ENCODE measurements at regions of chr4 and their contacts with region 1.

Region 1: GRCh38 chr4:88523325-88524129 is at the start of gene PYURF:
- DNase-seq: peak; percentile 46 to 85 (median 50)
- ATAC-seq: peak; percentile 85
- H3K4me3 ChIP-seq: peak within 1 kb of the TSS; percentile 75
- H3K4me3 Mint-ChIP-seq: peak within 1 kb of the TSS; percentile 88 to 98 (median 92)
- H3K27ac ChIP-seq: peak within 1 kb of the TSS; percentile 79
- H3K27ac Mint-ChIP-seq: peak within 1 kb of the TSS; percentile 88 to 97 (median 93)
- H3K4me1 ChIP-seq: peaks cover 10 to 19% of the 10 kb centered on the region in 2 donors
- H3K4me1 Mint-ChIP-seq: peaks cover 0 to 56% (median 48%) of the 10 kb centered on the region in 7 donors
- H3K27me3 ChIP-seq: no peaks in the 10 kb centered on the region
- H3K27me3 Mint-ChIP-seq: no peaks in the 10 kb centered on the region
- total RNA-seq, gene PYURF: 33.0 to 57.7 (median 47.4) TPM

Region 2: DNA sequence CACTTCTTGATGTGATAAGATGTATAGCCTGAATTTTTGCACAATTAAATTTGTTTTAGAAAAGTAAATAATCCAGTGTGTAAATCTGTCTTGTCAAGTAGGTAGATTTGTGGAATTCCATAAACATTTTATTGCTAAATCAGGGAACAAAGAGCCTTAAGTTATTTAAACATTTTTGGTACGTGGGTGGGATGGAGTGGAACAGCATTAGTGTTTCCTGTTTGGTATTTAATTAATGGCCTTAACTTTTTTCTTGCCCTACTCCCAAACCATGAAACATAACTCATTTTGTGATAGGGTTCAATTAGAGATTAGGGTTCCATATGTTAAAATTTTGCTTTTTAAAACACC is 1096.0 kb before region 1 on chr4:
- CTCF ChIA-PET with region 1: no interaction called
- POLR2A ChIA-PET with region 1: no interaction called
- intact Hi-C with region 1: no loop called
- DNase-seq: no peak
- ATAC-seq: no peak
- H3K4me3 ChIP-seq: no peak overlapping the region
- H3K4me3 Mint-ChIP-seq: no peak overlapping the region
- H3K27ac ChIP-seq: no peak overlapping the region
- H3K27ac Mint-ChIP-seq: no peak overlapping the region
- H3K4me1 ChIP-seq: peaks cover 9 to 15% of the 10 kb centered on the region in 2 donors
- H3K4me1 Mint-ChIP-seq: peaks cover 15 to 86% (median 75%) of the 10 kb centered on the region in 7 donors
- H3K27me3 ChIP-seq: no peaks in the 10 kb centered on the region
- H3K27me3 Mint-ChIP-seq: no peaks in the 10 kb centered on the region

Region 3: DNA sequence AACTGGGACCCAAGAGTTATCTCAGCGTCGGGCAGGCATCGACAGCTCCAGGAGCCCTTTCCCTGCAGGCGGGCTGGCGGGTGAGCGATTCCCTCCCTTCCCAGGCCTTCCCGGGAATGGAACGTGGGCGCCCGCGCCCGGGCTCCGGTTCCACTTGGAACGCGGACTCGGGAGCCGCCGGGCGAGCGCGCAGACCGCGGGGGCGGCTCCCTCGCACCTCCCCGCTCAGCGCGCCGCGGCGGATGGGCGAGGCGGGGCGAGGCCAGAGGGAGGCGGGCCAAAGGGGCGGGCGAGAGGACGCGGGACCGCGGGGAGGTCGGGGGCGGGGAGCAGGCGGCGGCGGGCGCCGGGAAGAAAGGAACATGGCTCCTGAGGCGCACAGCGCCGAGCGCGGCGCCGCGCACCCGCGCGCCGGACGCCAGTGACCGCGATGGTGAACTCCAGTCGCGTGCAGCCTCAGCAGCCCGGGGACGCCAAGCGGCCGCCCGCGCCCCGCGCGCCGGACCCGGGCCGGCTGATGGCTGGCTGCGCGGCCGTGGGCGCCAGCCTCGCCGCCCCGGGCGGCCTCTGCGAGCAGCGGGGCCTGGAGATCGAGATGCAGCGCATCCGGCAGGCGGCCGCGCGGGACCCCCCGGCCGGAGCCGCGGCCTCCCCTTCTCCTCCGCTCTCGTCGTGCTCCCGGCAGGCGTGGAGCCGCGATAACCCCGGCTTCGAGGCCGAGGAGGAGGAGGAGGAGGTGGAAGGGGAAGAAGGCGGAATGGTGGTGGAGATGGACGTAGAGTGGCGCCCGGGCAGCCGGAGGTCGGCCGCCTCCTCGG is 516.0 kb before region 1 on chr4 and contains the start of gene PKD2:
- CTCF ChIA-PET with region 1: no interaction called
- POLR2A ChIA-PET with region 1: no interaction called
- intact Hi-C with region 1: loop called in 1 of 2 experiments (anchors 5 kb)
- DNase-seq: peak; percentile 10 to 89 (median 54)
- ATAC-seq: peak; percentile 92
- H3K4me3 ChIP-seq: peak within 1 kb of the TSS; percentile 61
- H3K4me3 Mint-ChIP-seq: peak within 1 kb of the TSS; percentile 81 to 98 (median 94)
- H3K27ac ChIP-seq: peak within 1 kb of the TSS; percentile 56
- H3K27ac Mint-ChIP-seq: peak within 1 kb of the TSS; percentile 2 to 90 (median 58)
- H3K4me1 ChIP-seq: peaks cover 6 to 7% of the 10 kb centered on the region in 2 donors
- H3K4me1 Mint-ChIP-seq: peaks cover 19 to 42% (median 37%) of the 10 kb centered on the region in 7 donors
- H3K27me3 ChIP-seq: no peaks in the 10 kb centered on the region
- H3K27me3 Mint-ChIP-seq: peaks cover 0 to 31% (median 3%) of the 10 kb centered on the region in 5 donors
- total RNA-seq, gene PKD2: 4.9 to 16.1 (median 6.8) TPM

Region 4: GRCh38 chr4:88533937-88534750 is 10.6 kb after region 1 on chr4:
- CTCF ChIA-PET with region 1: interaction called, 11 read pairs
- POLR2A ChIA-PET with region 1: interaction called, 3 read pairs
- intact Hi-C with region 1: loop called in 1 of 2 experiments (anchors 1 kb)
- DNase-seq: no peak
- ATAC-seq: no peak
- H3K4me3 ChIP-seq: no peak overlapping the region
- H3K4me3 Mint-ChIP-seq: no peak overlapping the region
- H3K27ac ChIP-seq: no peak overlapping the region
- H3K27ac Mint-ChIP-seq: no peak overlapping the region
- H3K4me1 ChIP-seq: no peaks in the 10 kb centered on the region
- H3K4me1 Mint-ChIP-seq: no peaks in the 10 kb centered on the region
- H3K27me3 ChIP-seq: no peaks in the 10 kb centered on the region
- H3K27me3 Mint-ChIP-seq: no peaks in the 10 kb centered on the region

Region 5: DNA sequence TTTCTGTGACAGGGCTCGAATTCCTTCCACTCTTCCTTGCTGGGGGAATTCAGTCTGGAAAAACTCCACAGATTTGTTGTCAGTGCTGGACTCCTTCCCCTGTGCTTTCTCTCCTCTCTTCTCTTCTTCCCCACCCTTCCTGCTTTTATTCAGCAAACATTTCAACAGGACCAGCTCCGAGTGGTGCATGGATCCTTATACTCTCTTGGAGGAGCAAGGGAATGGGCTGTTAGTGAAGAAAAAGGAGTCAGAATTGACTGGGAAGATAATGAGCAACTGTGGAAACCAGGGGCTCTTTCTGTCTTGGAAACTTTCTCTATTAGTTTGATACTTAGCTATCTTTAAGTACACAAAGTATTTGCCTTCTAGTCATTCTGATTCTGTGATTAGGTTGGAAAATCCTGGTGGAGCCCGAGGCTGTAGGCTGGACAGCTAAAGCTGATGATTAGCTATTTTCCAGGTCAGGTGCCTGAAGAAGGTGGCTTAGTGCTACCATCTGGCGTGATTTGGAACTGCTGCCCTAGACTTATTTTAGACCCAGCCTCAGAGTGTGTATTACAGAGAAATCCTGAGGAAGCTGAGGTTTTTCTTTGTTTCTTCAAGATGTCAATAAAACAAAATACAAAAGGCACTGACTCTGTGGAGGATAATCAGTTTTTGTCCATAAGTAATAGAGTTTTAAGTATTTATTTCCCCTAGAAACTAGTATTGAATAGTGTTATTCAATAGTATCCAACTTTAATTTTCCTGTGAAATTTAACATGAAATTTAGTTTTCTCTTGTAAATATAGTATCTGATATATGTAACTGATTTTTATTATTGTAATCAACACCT is 135.7 kb after region 1 on chr4:
- CTCF ChIA-PET with region 1: interaction called, 3 read pairs
- POLR2A ChIA-PET with region 1: no interaction called
- intact Hi-C with region 1: loop called (anchors 1 kb)
- DNase-seq: peak in 7 of 9 donors; percentile 23 to 53 (median 44)
- ATAC-seq: peak; percentile 75
- H3K4me3 ChIP-seq: no peak overlapping the region
- H3K4me3 Mint-ChIP-seq: no peak overlapping the region
- H3K27ac ChIP-seq: no peak overlapping the region
- H3K27ac Mint-ChIP-seq: peak overlapping the region in 6 of 9 donors; percentile 5 to 86 (median 41)
- H3K4me1 ChIP-seq: no peaks in the 10 kb centered on the region
- H3K4me1 Mint-ChIP-seq: peaks cover 8 to 39% (median 24%) of the 10 kb centered on the region in 7 donors
- H3K27me3 ChIP-seq: no peaks in the 10 kb centered on the region
- H3K27me3 Mint-ChIP-seq: no peaks in the 10 kb centered on the region

Region 6: DNA sequence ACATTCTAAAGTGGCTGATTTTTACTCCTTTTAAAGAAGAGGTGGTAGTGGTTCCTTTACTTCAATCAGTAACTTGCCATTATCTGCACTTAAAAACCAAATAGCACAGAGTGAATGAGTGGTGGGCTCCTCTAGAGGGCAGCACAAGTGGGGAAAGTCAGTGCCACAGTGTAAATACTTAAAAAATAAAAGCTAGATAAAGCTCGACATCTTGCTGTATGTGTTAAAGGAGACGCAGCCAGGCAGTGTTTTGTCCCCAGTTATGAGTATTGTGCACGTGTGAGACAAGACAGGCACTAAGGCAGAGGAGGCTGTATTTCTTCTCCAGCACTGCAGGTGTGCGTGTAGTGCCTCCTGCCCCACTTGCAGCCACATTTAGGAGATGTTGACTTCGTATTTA is 149.5 kb after region 1 on chr4:
- CTCF ChIA-PET with region 1: no interaction called
- POLR2A ChIA-PET with region 1: no interaction called
- intact Hi-C with region 1: no loop called
- DNase-seq: peak in 6 of 9 donors; percentile 11 to 52 (median 34)
- ATAC-seq: peak; percentile 64
- H3K4me3 ChIP-seq: no peak overlapping the region
- H3K4me3 Mint-ChIP-seq: no peak overlapping the region
- H3K27ac ChIP-seq: no peak overlapping the region
- H3K27ac Mint-ChIP-seq: peak overlapping the region in 5 of 9 donors; percentile 2 to 59 (median 54)
- H3K4me1 ChIP-seq: no peaks in the 10 kb centered on the region
- H3K4me1 Mint-ChIP-seq: peaks cover 0 to 8% (median 5%) of the 10 kb centered on the region in 7 donors
- H3K27me3 ChIP-seq: no peaks in the 10 kb centered on the region
- H3K27me3 Mint-ChIP-seq: no peaks in the 10 kb centered on the region

Region 7: DNA sequence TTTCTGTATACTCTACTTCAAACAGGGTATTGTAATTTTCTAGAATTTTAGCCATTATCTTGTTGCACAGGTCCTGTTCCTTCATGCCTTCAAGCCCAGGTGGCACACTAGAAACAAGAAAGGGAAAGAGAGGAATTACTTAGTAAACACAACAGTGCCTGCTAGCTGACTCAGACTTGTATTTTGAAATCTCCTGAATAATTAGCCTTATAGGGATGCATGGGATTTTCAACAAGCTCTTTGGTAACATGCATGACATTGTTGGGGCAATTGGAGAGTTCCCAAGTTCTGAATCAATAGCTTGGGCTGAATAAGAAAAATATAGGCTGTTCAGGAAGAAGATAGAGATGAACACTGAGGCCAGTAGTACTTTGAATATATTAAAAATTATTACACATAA is 414.6 kb after region 1 on chr4:
- CTCF ChIA-PET with region 1: interaction called, 3 read pairs
- POLR2A ChIA-PET with region 1: no interaction called
- intact Hi-C with region 1: loop called in 1 of 2 experiments (anchors 10 kb)
- DNase-seq: no peak
- ATAC-seq: no peak
- H3K4me3 ChIP-seq: no peak overlapping the region
- H3K4me3 Mint-ChIP-seq: no peak overlapping the region
- H3K27ac ChIP-seq: no peak overlapping the region
- H3K27ac Mint-ChIP-seq: peak overlapping the region in 2 of 9 donors; percentile 15 to 30
- H3K4me1 ChIP-seq: peaks cover 0 to 33% of the 10 kb centered on the region in 2 donors
- H3K4me1 Mint-ChIP-seq: peaks cover 20 to 69% (median 54%) of the 10 kb centered on the region in 7 donors
- H3K27me3 ChIP-seq: no peaks in the 10 kb centered on the region
- H3K27me3 Mint-ChIP-seq: no peaks in the 10 kb centered on the region

Region 8: DNA sequence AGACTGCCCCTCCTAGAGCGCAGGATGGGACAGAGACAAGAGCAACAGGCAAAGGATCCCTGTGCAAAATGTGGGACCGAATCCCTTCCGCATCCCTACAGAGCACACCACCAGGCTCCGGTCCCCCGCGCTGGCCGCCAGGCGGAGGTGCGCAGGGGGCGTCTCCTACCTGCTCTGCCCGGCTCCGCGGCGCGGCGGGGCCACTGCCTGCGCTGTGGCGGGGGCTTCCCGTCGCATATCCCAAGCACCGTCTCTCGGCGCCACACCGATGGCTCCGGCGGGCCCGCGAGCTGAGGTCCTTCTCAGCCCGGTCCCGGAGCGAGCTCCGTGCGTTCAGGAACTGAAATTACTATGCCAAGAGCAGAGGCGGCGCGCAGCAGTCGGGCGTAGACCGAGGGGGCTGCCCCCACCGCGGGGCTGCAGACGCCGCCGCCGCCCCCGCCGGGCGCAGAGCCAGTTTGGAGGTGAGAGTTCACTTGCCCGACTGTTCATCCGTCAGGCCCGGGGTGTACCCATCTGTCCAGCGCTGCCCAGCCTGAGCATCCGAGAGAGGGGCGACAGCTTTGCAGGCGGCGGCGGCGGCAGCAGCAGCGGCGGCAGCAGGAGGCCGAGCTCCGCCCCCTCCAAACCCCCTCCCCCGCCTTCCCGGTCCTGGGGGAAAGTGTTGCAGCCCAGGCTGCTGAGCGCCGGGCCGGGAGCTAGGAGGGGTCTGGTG is 784.1 kb after region 1 on chr4 and contains the start of gene GPRIN3:
- CTCF ChIA-PET with region 1: no interaction called
- POLR2A ChIA-PET with region 1: no interaction called
- intact Hi-C with region 1: loop called in 1 of 2 experiments (anchors 10 kb)
- DNase-seq: peak; percentile 54 to 80 (median 66)
- ATAC-seq: peak; percentile 79
- H3K4me3 ChIP-seq: peak within 1 kb of the TSS; percentile 93
- H3K4me3 Mint-ChIP-seq: peak within 1 kb of the TSS; percentile 80 to 99 (median 94)
- H3K27ac ChIP-seq: peak within 1 kb of the TSS; percentile 81
- H3K27ac Mint-ChIP-seq: peak within 1 kb of the TSS; percentile 83 to 98 (median 90)
- H3K4me1 ChIP-seq: peaks cover 18 to 20% of the 10 kb centered on the region in 2 donors
- H3K4me1 Mint-ChIP-seq: peaks cover 39 to 70% (median 64%) of the 10 kb centered on the region in 7 donors
- H3K27me3 ChIP-seq: no peaks in the 10 kb centered on the region
- H3K27me3 Mint-ChIP-seq: no peaks in the 10 kb centered on the region
- total RNA-seq, gene GPRIN3: 10.2 to 55.5 (median 24.8) TPM

Measured in naive thymus-derived CD4-positive, alpha-beta T cell (primary cell).